ENCODE measurements at regions of chr14 and their contacts with region 1.

Region 1: GRCh38 chr14:37186865-37187264 is 10.9 kb upstream of the MIPOL1 start:
- DNase-seq: no peak
- ATAC-seq: no peak
- H3K4me3 ChIP-seq: no peak overlapping the region
- H3K4me3 Mint-ChIP-seq: no peak overlapping the region
- H3K27ac ChIP-seq: no peak overlapping the region
- H3K27ac Mint-ChIP-seq: no peak overlapping the region
- H3K4me1 ChIP-seq: no peaks in the 10 kb centered on the region
- H3K4me1 Mint-ChIP-seq: no peaks in the 10 kb centered on the region
- H3K27me3 ChIP-seq: no peaks in the 10 kb centered on the region
- H3K27me3 Mint-ChIP-seq: no peaks in the 10 kb centered on the region
- CTCF ChIP-seq: no peak

Region 2: DNA sequence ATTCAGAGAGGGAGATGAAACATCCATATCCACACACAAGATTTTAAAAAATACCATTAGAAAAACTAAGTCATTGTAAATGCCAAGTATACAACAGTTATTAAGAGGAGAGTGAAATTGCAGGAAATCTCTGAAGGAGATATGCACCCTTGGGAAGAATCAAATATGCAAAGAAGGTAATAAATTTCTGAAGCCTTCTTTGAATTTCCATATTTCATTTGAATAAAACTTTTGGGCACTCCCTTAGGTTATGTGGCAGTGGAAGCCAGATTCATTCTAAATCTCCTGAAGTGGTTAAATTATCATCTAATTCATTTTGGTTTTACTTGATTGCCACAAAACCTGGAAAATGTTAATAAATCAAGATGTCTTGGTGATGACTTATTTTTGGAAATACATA is 1207.9 kb after region 1 on chr14:
- CTCF ChIA-PET with region 1: no interaction called
- POLR2A ChIA-PET with region 1: interaction called, 15 read pairs
- intact Hi-C with region 1: no loop called
- DNase-seq: no peak
- ATAC-seq: no peak
- H3K4me3 ChIP-seq: no peak overlapping the region
- H3K4me3 Mint-ChIP-seq: no peak overlapping the region
- H3K27ac ChIP-seq: no peak overlapping the region
- H3K27ac Mint-ChIP-seq: no peak overlapping the region
- H3K4me1 ChIP-seq: no peaks in the 10 kb centered on the region
- H3K4me1 Mint-ChIP-seq: no peaks in the 10 kb centered on the region
- H3K27me3 ChIP-seq: no peaks in the 10 kb centered on the region
- H3K27me3 Mint-ChIP-seq: no peaks in the 10 kb centered on the region
- CTCF ChIP-seq: no peak